ENCODE measurements at regions of chr4 and their contacts with region 1.

Region 1: GRCh38 chr4:13654158-13654797 is 26.8 kb upstream of the BOD1L1 start:
- DNase-seq: peak; percentile 62
- H3K4me3 ChIP-seq: peak overlapping the region; percentile 54 to 61 (median 54)
- H3K27ac ChIP-seq: no peak overlapping the region
- H3K4me1 ChIP-seq: peaks cover 18% of the 10 kb centered on the region
- H3K27me3 ChIP-seq: no peaks in the 10 kb centered on the region
- CTCF ChIP-seq: peak; percentile 90 to 96

Region 2: GRCh38 chr4:13860126-13860525 is 205.8 kb after region 1 on chr4:
- CTCF ChIA-PET with region 1: interaction called, 6 read pairs
- dilution Hi-C with region 1: no loop called
- in situ Hi-C with region 1: no loop called
- intact Hi-C with region 1: loop called (anchors 1 kb)
- DNase-seq: no peak
- H3K4me3 ChIP-seq: no peak overlapping the region
- H3K27ac ChIP-seq: no peak overlapping the region
- H3K4me1 ChIP-seq: no peaks in the 10 kb centered on the region
- H3K27me3 ChIP-seq: no peaks in the 10 kb centered on the region
- CTCF ChIP-seq: peak; percentile 7 to 36

Region 3: DNA sequence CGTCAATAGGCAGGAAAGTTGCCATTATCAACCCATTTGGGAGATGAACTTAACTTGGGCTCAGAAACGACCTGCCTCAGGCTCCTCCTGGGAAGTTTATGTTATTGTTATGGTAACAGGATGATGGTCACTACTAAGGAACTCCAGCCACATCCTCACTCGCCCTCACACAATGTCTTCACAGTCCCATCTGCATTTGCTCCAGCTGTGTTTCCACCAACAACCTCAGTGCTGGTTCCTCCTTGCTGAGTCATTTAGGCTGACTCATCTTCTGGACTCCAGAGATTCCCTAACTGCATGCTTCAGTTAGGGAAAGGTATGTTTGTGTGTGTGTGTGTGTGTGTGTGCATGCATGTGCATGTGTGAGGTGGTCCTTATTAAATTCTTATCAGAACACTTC is 266.6 kb after region 1 on chr4:
- CTCF ChIA-PET with region 1: no interaction called
- dilution Hi-C with region 1: no loop called
- in situ Hi-C with region 1: no loop called
- intact Hi-C with region 1: loop called (anchors 1 kb)
- DNase-seq: peak; percentile 100
- H3K4me3 ChIP-seq: no peak overlapping the region
- H3K27ac ChIP-seq: peak overlapping the region; percentile 100
- H3K4me1 ChIP-seq: peaks cover 52% of the 10 kb centered on the region
- H3K27me3 ChIP-seq: no peaks in the 10 kb centered on the region
- CTCF ChIP-seq: no peak

Region 4: DNA sequence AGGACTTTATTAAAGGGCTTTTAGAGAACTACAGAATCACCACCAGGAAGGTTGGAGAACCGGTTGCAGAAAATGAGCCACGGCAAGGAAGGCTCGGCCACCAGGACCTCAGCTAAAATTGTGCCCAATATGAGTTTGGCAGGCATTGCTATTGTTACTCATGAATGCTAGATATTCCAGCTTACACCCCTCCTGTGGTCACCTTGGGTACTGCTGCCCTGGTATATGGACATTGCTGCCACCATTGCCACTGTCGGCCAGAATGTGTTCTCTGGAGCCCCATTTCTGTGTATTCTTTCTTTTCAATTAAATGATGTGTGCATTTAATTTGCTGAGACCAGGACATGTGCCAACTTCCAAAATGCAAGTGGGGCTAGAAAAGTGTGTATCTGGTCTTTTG is 600.0 kb after region 1 on chr4:
- CTCF ChIA-PET with region 1: no interaction called
- dilution Hi-C with region 1: loop called (anchors 10 kb)
- in situ Hi-C with region 1: loop called in 1 of 2 experiments (anchors 25 kb)
- intact Hi-C with region 1: loop called (anchors 1 kb)
- DNase-seq: peak; percentile 46
- H3K4me3 ChIP-seq: no peak overlapping the region
- H3K27ac ChIP-seq: no peak overlapping the region
- H3K4me1 ChIP-seq: no peaks in the 10 kb centered on the region
- H3K27me3 ChIP-seq: no peaks in the 10 kb centered on the region
- CTCF ChIP-seq: peak; percentile 78 to 93

Region 5: DNA sequence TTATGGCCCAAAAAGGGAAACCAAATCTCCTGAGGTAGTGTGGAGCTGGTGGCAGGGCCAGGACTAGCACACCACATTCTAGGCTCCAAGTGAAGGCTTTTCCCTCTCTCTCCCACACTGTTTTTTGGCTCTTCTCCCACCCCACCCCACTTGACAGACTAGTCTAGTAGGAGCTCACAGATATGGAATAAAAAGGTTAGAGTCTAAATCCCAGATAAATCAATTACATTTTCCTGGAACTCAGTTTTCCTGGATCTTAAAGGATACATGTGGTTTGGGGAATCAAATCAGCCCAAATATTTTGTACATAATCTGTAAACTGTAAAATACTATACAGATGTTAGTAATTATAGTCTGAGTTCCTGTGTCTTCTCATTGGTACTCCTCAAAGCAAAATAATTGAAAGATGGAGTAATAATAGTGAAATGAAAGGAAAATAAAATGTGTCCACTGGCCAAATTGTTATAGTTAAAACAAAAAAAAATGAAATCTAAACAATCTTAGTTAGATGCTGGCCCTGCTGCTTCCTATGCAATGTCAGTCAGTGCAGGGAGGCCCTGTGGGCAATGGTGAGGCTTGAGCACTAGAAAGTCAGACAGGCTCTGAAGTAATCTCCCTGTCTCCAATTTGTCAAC is 977.6 kb after region 1 on chr4:
- CTCF ChIA-PET with region 1: interaction called, 24 read pairs
- dilution Hi-C with region 1: no loop called
- in situ Hi-C with region 1: no loop called
- intact Hi-C with region 1: no loop called
- DNase-seq: no peak
- H3K4me3 ChIP-seq: no peak overlapping the region
- H3K27ac ChIP-seq: no peak overlapping the region
- H3K4me1 ChIP-seq: no peaks in the 10 kb centered on the region
- H3K27me3 ChIP-seq: no peaks in the 10 kb centered on the region
- CTCF ChIP-seq: no peak

Region 6: DNA sequence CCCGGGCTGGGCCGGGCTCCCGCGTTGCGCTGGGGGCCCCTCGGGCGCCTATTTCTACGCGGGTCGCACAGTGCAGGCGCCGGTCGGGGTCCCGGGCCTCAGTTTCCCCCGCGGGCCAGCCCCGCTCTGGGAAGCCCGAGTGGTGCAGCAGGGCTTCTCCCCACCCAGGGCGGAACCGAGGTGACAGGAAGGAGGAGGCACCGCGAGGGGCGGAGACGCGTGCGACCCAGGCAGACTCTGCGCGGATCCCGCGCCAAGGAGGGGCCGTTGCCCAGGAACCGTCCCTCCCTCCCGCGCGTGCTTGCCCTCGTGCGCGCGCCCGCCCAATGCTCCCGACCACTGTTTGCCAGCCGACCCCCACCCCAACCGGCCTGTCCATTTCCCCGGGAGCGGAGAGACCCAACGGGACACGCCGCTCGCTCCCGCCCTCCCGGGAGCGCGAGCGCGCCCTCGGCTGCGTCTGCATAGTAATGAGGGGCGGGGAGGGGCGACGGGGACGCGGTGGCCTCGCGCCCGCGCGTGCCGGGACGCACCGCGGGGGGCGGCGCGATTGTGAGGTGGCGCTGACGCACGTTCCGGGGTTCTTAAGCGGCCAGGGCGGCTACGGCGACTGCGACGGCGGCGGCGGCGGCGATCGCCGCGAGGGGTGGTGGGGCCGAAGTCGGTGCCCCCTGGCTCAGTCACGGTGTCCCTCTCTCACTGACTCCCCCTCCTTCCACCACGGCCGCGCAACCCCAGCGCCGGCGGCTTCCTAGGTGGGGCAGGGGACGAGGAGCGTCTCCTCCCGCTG is 1347.8 kb after region 1 on chr4 and contains the start of gene CPEB2:
- CTCF ChIA-PET with region 1: no interaction called
- dilution Hi-C with region 1: no loop called
- in situ Hi-C with region 1: loop called in 1 of 2 experiments (anchors 25 kb)
- intact Hi-C with region 1: loop called (anchors 2 kb)
- DNase-seq: peak; percentile 94
- H3K4me3 ChIP-seq: peak within 1 kb of the TSS; percentile 63 to 98 (median 72)
- H3K27ac ChIP-seq: peak within 1 kb of the TSS; percentile 89
- H3K4me1 ChIP-seq: peaks cover 3% of the 10 kb centered on the region
- H3K27me3 ChIP-seq: no peaks in the 10 kb centered on the region
- CTCF ChIP-seq: no peak
- total RNA-seq, gene CPEB2: 16.1 to 21.5 TPM